ENCODE measurements at regions of chr11 and their contacts with region 1.

Region 1: GRCh38 chr11:10405855-10406592 is 49.0 kb upstream of the AMPD3 start:
- DNase-seq: peak; percentile 68
- H3K4me3 ChIP-seq: no peak overlapping the region
- H3K27ac ChIP-seq: peak overlapping the region; percentile 15
- H3K4me1 ChIP-seq: peaks cover 19% of the 10 kb centered on the region
- H3K27me3 ChIP-seq: no peaks in the 10 kb centered on the region
- CTCF ChIP-seq: peak; percentile 77 to 80

Region 2: GRCh38 chr11:9972989-9973388 is 433.0 kb before region 1 on chr11:
- CTCF ChIA-PET with region 1: interaction called, 13 read pairs
- dilution Hi-C with region 1: no loop called
- in situ Hi-C with region 1: no loop called
- intact Hi-C with region 1: no loop called
- DNase-seq: peak; percentile 39
- H3K4me3 ChIP-seq: no peak overlapping the region
- H3K27ac ChIP-seq: no peak overlapping the region
- H3K4me1 ChIP-seq: no peaks in the 10 kb centered on the region
- H3K27me3 ChIP-seq: no peaks in the 10 kb centered on the region
- CTCF ChIP-seq: peak; percentile 75 to 83

Region 3: GRCh38 chr11:10462746-10463300 is 56.8 kb after region 1 on chr11:
- CTCF ChIA-PET with region 1: no interaction called
- dilution Hi-C with region 1: no loop called
- in situ Hi-C with region 1: no loop called
- intact Hi-C with region 1: no loop called
- DNase-seq: no peak
- H3K4me3 ChIP-seq: no peak overlapping the region
- H3K27ac ChIP-seq: no peak overlapping the region
- H3K4me1 ChIP-seq: no peaks in the 10 kb centered on the region
- H3K27me3 ChIP-seq: no peaks in the 10 kb centered on the region
- CTCF ChIP-seq: no peak

Region 4: DNA sequence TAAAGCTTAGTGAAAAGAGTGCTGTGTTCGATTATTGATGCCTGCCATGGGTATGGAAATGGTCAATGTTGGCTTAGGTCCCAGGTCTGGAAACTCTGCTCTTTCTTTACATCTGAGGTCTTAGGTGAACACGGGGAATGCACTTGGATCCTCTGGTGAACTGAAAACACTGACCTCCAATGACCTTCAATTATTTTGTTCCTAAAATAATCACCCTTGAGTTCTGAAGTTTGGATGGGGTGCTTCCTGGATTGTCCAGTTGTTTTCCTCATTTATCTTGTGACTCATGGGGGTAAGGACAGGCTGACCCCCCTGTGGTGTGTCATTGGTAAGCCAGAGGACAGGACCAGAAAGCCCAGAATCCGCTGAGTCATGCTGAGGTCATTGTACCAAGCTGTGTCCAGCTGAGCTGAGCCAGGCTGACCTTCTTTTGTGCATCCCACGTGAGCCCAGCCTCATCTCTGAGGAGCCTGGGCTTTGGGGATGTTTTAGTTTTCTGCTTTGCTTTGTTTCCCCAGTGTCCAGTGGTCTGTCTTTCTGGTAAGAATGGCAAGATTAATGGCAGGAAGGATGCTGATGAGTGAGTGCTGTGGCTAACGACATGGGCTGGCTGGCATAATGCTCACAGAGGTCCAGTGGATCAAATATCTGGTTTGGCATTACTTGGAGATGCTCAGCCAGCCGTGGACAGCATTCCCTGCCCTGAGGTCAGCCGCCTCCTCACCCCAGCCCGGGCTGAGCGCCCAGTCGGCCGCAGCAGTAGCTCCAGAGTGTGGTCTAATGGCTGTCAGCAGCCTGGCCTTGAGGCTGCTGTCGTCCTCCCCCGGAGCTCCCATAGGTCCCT is 84.6 kb after region 1 on chr11:
- CTCF ChIA-PET with region 1: no interaction called
- dilution Hi-C with region 1: no loop called
- in situ Hi-C with region 1: no loop called
- intact Hi-C with region 1: no loop called
- DNase-seq: peak; percentile 81
- H3K4me3 ChIP-seq: no peak overlapping the region
- H3K27ac ChIP-seq: peak overlapping the region; percentile 90
- H3K4me1 ChIP-seq: peaks cover 38% of the 10 kb centered on the region
- H3K27me3 ChIP-seq: no peaks in the 10 kb centered on the region
- CTCF ChIP-seq: no peak

Region 5: GRCh38 chr11:10526974-10527918 is 121.2 kb after region 1 on chr11:
- CTCF ChIA-PET with region 1: no interaction called
- dilution Hi-C with region 1: no loop called
- in situ Hi-C with region 1: loop called in 1 of 2 experiments (anchors 10 kb)
- intact Hi-C with region 1: no loop called
- DNase-seq: peak; percentile 69
- H3K4me3 ChIP-seq: no peak overlapping the region
- H3K27ac ChIP-seq: peak overlapping the region; percentile 39
- H3K4me1 ChIP-seq: peaks cover 12% of the 10 kb centered on the region
- H3K27me3 ChIP-seq: no peaks in the 10 kb centered on the region
- CTCF ChIP-seq: no peak

Region 6: DNA sequence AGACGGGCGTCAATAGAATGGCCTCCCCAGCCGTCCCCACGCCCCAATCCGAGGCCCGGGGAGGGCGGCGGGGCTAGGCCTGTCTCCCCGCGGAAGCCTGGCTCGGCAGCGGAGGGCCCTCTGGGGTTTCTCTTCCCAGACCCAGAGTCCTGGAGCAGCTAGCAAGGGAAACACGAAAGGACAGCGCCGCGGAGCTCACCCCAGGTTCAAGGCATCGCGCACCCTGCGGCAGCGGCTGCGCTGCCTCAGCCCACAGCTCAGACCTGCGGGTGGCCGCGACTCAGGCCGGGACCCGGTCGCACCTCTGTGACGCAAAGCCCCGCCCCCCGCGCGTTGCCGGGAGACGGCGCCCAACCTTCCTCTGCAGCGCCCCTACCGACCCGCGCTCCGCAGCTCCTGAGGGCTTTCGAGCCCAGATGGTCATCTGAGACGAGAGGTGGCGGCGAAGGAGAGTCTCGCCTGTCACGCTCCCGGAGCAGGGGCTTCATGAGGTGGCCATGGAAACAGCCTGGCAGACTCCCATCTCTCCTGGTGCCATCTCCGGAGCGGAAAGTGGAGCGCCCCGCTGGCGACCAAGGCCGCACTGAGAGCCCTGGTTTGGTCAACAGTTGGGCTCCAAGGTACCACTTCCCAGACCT is 135.0 kb after region 1 on chr11 and contains the start of gene RNF141:
- CTCF ChIA-PET with region 1: interaction called, 3 read pairs
- dilution Hi-C with region 1: no loop called
- in situ Hi-C with region 1: no loop called
- intact Hi-C with region 1: loop called (anchors 1 kb)
- DNase-seq: peak; percentile 91
- H3K4me3 ChIP-seq: peak within 1 kb of the TSS; percentile 64 to 89 (median 72)
- H3K27ac ChIP-seq: peak within 1 kb of the TSS; percentile 85
- H3K4me1 ChIP-seq: peaks cover 9% of the 10 kb centered on the region
- H3K27me3 ChIP-seq: no peaks in the 10 kb centered on the region
- CTCF ChIP-seq: peak; percentile 69 to 91
- total RNA-seq, gene RNF141: 45.7 to 58.2 TPM

Region 7: GRCh38 chr11:10653926-10654810 is 248.1 kb after region 1 on chr11:
- CTCF ChIA-PET with region 1: no interaction called
- dilution Hi-C with region 1: no loop called
- in situ Hi-C with region 1: no loop called
- intact Hi-C with region 1: loop called (anchors 1 kb)
- DNase-seq: peak; percentile 55
- H3K4me3 ChIP-seq: no peak overlapping the region
- H3K27ac ChIP-seq: no peak overlapping the region
- H3K4me1 ChIP-seq: peaks cover 25% of the 10 kb centered on the region
- H3K27me3 ChIP-seq: no peaks in the 10 kb centered on the region
- CTCF ChIP-seq: peak; percentile 65 to 74

Region 8: GRCh38 chr11:10725114-10725906 is 319.3 kb after region 1 on chr11:
- CTCF ChIA-PET with region 1: no interaction called
- dilution Hi-C with region 1: no loop called
- in situ Hi-C with region 1: loop called (anchors 5 kb)
- intact Hi-C with region 1: no loop called
- DNase-seq: peak; percentile 96
- H3K4me3 ChIP-seq: no peak overlapping the region
- H3K27ac ChIP-seq: no peak overlapping the region
- H3K4me1 ChIP-seq: peaks cover 15% of the 10 kb centered on the region
- H3K27me3 ChIP-seq: peaks cover 10% of the 10 kb centered on the region
- CTCF ChIP-seq: no peak